Dorsolateral prefrontal cortex (tissue), 120 donors: ENCODE measurements at regions of chr11 and their contacts with region 1.

Region 1: DNA sequence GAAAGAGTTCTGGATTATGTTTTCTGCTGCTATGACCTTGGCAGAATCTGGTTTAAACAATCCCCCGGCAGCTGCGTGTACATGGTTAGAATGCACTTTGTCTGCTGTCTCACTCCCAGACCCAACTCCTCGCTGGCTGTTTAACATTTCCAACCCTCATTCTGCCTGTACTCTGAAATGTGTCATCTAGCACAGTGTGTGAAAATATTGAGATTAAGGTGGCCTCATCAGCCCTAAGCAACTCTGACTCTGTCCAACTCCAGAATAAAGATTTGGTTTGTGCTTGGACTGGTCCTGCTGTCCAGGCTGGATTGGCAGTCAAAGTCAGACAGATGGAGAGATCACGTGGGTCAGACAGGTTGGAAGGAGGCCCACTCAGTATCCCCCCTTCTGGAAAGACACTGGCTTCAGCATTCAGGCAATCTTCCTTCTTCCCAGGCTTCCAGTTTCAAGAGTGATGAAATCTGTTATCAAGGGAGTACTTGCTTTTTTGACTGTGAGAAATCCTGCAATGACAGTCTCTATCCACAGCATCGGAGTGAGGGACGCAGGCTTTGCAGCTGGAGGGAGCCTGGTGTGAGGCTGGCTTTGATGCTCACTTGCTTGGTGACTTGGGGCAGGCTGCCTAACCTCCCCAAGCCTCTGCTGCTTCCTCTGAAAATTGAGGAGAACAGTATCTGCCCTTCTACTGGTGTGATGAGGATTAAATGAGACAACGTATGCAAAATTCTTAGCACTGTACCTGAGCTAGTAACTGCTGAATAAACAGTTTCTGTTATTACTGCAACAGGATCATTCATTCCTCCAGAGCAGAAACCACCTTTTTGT is 29.8 kb downstream of the ABTB2 start:
- DNase-seq: peak in 3 of 10 donors; percentile 15 to 72 (median 58)
- H3K4me3 ChIP-seq: peak overlapping the region in 3 of 59 donors; percentile 8 to 11 (median 10)
- H3K27ac ChIP-seq: peak overlapping the region in 29 of 59 donors; percentile 0 to 63 (median 17)
- H3K27me3 ChIP-seq: no peaks in the 10 kb centered on the region
- CTCF ChIP-seq: peak in 5 of 56 donors; percentile 9 to 19 (median 11)

Region 2: DNA sequence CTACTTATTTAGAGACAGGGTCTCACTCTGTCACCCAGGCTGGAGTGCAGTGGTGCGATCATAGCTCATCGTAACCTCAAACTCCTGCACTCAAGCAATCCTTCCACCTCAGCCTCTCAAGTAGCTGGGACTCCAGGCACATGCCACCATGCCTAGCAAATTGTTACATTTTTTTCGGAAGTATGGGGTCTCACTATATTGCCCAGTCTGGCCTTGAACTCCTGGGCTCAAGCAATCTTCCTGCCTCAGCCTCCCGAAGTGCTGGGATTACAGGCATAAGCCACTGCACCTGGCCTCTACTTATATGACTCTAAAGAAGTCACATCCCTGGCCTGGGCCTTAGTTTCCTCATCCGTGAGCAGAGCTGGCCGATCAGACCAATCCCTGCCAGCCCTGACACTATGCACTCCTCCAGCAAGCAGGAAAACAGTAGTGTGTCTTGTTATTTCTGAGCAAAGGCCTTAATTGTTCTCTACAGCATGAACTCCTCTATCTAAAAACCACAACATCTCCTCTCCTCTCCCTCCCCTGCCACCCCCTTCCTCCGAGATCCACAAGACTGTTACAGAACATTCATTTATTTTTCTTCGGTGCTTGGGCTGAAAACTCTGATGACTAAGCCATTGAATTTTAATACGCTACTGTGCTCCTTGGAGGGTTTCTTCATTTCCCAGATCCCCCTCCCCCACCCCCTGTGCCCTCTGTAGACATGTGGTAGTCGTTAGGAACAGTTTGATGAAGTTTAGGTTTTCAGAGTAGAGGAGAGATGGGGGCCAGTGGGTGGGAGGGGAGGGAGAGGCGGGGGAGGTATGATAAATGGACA is 61.7 kb before region 1 on chr11:
- intact Hi-C with region 1: loop called in 1 of 2 experiments (anchors 5 kb)
- DNase-seq: peak in 6 of 10 donors; percentile 27 to 58 (median 49)
- H3K4me3 ChIP-seq: peak overlapping the region in 14 of 59 donors; percentile 1 to 19 (median 7)
- H3K27ac ChIP-seq: peak overlapping the region in 54 of 59 donors; percentile 8 to 89 (median 69)
- H3K27me3 ChIP-seq: no peaks in the 10 kb centered on the region
- CTCF ChIP-seq: no peak